Transverse colon (tissue), 4 donors: ENCODE measurements at regions of chr11 and their contacts with region 1.

Region 1: GRCh38 chr11:80758787-80759186 is 1318.0 kb upstream of the TENM4 start:
- DNase-seq: no peak
- H3K4me3 ChIP-seq: no peak overlapping the region
- H3K27ac ChIP-seq: no peak overlapping the region
- H3K4me1 ChIP-seq: no peaks in the 10 kb centered on the region
- H3K27me3 ChIP-seq: no peaks in the 10 kb centered on the region
- CTCF ChIP-seq: no peak
- EP300 ChIP-seq: no peak
- POLR2A ChIP-seq: no peak

Region 2: DNA sequence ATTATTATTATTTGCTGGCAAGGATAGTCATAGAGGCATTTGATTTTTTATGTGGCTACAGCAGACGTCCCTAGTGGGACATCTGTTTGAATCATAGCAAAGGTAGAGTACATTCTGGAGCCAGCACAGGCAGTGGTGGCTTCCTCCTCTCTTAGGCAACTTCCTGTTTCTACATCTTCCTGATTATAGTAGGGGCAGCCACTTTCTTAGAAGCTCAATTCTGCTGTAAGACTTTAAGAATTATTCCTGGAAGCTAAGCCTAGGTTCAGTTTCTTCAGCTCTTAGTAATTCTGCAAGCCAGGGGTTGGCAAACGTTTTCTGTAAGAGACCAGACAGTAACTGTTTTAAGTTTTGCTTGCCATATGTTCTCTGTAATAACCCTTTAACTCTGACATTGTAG is 1188.7 kb before region 1 on chr11:
- in situ Hi-C with region 1: no loop called
- intact Hi-C with region 1: no loop called
- DNase-seq: no peak
- H3K4me3 ChIP-seq: no peak overlapping the region
- H3K27ac ChIP-seq: no peak overlapping the region
- H3K4me1 ChIP-seq: no peaks in the 10 kb centered on the region
- H3K27me3 ChIP-seq: no peaks in the 10 kb centered on the region
- CTCF ChIP-seq: no peak
- EP300 ChIP-seq: no peak
- POLR2A ChIP-seq: no peak

Region 3: DNA sequence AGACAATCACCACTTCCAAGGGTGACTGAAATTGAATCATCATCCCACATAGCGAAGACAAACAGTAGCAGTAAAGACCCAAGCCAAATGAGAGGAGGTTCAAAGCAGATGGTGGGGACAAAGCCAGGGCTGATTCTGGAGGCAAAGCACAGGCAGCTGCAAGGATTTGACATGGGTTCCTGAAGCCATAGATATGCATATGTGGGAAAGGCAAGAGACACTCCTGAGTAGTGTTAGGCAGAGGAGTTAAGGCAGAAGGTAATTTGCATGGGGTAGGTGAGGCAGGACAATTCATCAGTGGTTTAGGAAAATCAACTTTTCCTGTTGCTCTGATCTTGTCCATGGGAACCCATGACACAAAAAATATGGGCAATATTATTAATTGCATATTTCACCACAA is 1512.1 kb after region 1 on chr11:
- in situ Hi-C with region 1: no loop called
- intact Hi-C with region 1: loop called (anchors 5 kb)
- DNase-seq: no peak
- H3K4me3 ChIP-seq: no peak overlapping the region
- H3K27ac ChIP-seq: no peak overlapping the region
- H3K4me1 ChIP-seq: no peaks in the 10 kb centered on the region
- H3K27me3 ChIP-seq: no peaks in the 10 kb centered on the region
- CTCF ChIP-seq: no peak
- EP300 ChIP-seq: no peak
- POLR2A ChIP-seq: no peak